SK-N-SH (cell line): ENCODE measurements at regions of chr13 and their contacts with region 1.

Region 1: DNA sequence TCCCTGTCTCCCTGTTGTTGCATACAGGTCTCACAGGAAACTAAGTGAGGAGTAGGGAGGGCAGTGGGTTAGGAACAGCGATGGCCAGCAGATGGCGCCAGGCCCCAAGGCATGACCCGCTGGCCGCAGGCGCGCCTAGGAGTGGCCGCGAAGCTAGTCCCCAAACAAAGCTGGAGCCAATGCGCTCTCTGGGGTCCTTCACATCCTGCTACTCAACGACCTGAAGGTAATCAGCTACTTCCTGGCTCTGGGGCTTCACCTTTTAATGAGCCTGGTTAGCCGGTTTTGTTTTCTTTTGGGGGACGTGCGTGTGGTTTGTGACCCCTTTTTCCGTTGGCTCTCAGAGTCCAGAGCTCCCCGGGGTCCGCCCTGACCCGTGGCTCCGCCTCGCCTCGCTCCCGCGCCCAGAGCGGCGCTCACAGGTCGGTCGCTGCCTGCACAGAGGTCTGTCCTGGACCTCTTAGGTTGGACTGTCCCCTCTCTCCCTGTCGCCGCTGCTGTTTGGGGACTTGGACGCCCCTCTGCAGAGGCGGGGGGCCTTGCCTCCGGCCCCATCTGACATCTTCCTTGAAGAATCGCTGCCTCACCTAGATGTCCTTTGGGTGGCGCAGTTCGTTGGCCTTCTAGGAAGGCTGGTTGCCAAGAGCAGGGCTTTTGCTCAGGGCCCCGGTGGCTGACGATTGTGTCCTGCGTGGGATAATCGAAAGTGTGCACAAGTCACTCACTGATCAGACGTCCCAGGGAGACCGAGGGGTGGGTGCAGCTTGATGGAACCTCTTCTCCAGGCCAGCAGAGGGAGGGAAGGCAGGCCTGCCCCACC is 62.1 kb upstream of the GTF3A start:
- DNase-seq: peak; percentile 89
- H3K4me3 ChIP-seq: peak overlapping the region; percentile 45 to 66
- H3K27ac ChIP-seq: no peak overlapping the region
- H3K4me1 ChIP-seq: peaks cover 0 to 5% of the 10 kb centered on the region in 2 experiments; a peak in 1 of 4 replicates
- H3K27me3 ChIP-seq: peaks cover 27% of the 10 kb centered on the region
- CTCF ChIP-seq: peak; percentile 92
- EP300 ChIP-seq: no peak
- RAD21 ChIP-seq: peak; percentile 90

Region 2: GRCh38 chr13:26946684-26947343 is 415.5 kb before region 1 on chr13:
- CTCF ChIA-PET with region 1: interaction called, 108 read pairs
- POLR2A ChIA-PET with region 1: no interaction called
- DNase-seq: peak; percentile 48
- H3K4me3 ChIP-seq: no peak overlapping the region
- H3K27ac ChIP-seq: no peak overlapping the region
- H3K4me1 ChIP-seq: no peaks in the 10 kb centered on the region
- H3K27me3 ChIP-seq: no peaks in the 10 kb centered on the region
- CTCF ChIP-seq: peak; percentile 80
- EP300 ChIP-seq: no peak
- RAD21 ChIP-seq: peak; percentile 90

Region 3: DNA sequence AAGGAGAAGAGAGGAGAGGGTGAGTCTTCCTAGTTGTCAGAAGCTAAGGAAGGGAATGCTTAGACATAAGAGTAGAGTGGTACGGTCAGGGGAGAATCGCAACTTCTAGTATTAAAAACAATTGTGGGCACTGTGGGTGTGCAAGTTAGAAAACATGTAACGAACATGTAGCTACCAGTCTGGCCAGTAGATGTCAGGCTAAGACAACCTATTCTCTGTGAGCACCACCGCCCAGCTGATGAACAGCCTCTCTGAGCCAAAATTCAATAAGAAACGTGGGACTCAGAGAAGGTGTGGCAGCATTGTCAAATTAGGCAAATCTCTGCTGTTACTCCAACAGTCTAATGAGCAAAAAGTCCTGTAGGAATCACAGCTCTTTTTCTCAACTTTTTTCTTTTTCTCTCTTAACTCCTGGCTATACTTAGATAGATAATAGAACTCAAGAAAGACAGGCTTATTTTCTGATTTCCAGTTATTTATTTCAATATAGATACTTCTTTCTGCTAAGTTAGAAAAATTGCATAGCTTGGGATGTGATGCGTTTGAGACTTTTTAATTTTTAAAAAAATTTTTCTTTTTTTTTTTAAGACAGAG is 376.9 kb before region 1 on chr13:
- CTCF ChIA-PET with region 1: interaction called, 273 read pairs
- POLR2A ChIA-PET with region 1: interaction called, 3 read pairs
- DNase-seq: peak; percentile 72
- H3K4me3 ChIP-seq: no peak overlapping the region; a peak in 1 of 4 replicates
- H3K27ac ChIP-seq: no peak overlapping the region
- H3K4me1 ChIP-seq: peaks cover 0 to 8% of the 10 kb centered on the region in 2 experiments; a peak in 2 of 4 replicates
- H3K27me3 ChIP-seq: no peaks in the 10 kb centered on the region
- CTCF ChIP-seq: peak; percentile 84
- EP300 ChIP-seq: no peak
- RAD21 ChIP-seq: peak; percentile 98

Region 4: DNA sequence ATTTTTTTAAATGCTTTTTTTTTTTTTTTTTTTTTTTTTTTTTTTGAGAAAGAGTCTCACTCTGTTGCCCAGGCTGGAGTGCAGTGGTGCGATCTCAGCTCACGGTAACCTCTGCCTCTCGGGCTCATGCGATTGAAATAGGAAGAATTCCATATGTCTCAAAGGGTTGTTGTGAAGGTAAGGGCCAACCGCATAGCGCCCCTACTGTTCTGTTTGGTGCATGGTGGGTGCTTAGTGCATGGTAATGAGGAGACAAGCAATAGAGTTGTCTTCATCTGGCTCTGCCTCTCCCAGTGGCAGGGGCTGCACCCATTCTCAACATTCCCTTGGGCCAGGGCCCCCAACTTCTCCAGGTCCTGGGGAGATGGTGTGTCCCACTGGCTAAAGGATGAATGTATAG is 23.0 kb before region 1 on chr13:
- CTCF ChIA-PET with region 1: interaction called, 31 read pairs
- POLR2A ChIA-PET with region 1: no interaction called
- DNase-seq: peak; percentile 61
- H3K4me3 ChIP-seq: no peak overlapping the region
- H3K27ac ChIP-seq: no peak overlapping the region
- H3K4me1 ChIP-seq: no peaks in the 10 kb centered on the region; a peak in 1 of 4 replicates
- H3K27me3 ChIP-seq: peaks cover 42% of the 10 kb centered on the region
- CTCF ChIP-seq: peak; percentile 62
- EP300 ChIP-seq: no peak
- RAD21 ChIP-seq: peak; percentile 54

Region 5: GRCh38 chr13:27379694-27380641 is 17.7 kb after region 1 on chr13:
- CTCF ChIA-PET with region 1: interaction called, 22 read pairs
- POLR2A ChIA-PET with region 1: no interaction called
- DNase-seq: peak; percentile 69
- H3K4me3 ChIP-seq: no peak overlapping the region; a peak in 1 of 4 replicates
- H3K27ac ChIP-seq: no peak overlapping the region
- H3K4me1 ChIP-seq: no peaks in the 10 kb centered on the region
- H3K27me3 ChIP-seq: peaks cover 56% of the 10 kb centered on the region
- CTCF ChIP-seq: peak; percentile 62
- EP300 ChIP-seq: no peak
- RAD21 ChIP-seq: peak; percentile 66

Region 6: GRCh38 chr13:27953676-27954405 is 591.6 kb after region 1 on chr13:
- CTCF ChIA-PET with region 1: interaction called, 34 read pairs
- POLR2A ChIA-PET with region 1: no interaction called
- DNase-seq: peak; percentile 90
- H3K4me3 ChIP-seq: peak overlapping the region; percentile 24 to 45; a peak in 2 of 4 replicates
- H3K27ac ChIP-seq: no peak overlapping the region
- H3K4me1 ChIP-seq: no peaks in the 10 kb centered on the region
- H3K27me3 ChIP-seq: peaks cover 41% of the 10 kb centered on the region
- CTCF ChIP-seq: peak; percentile 72
- EP300 ChIP-seq: no peak
- RAD21 ChIP-seq: peak; percentile 64